Left colon (tissue), 2 donors: ENCODE measurements at regions of chr1 and their contacts with region 1.

Region 1: GRCh38 chr1:171743081-171743870 is 1.4 kb upstream of the VAMP4 start:
- DNase-seq: peak; percentile 29 to 41
- ATAC-seq: peak; percentile 61

Region 2: DNA sequence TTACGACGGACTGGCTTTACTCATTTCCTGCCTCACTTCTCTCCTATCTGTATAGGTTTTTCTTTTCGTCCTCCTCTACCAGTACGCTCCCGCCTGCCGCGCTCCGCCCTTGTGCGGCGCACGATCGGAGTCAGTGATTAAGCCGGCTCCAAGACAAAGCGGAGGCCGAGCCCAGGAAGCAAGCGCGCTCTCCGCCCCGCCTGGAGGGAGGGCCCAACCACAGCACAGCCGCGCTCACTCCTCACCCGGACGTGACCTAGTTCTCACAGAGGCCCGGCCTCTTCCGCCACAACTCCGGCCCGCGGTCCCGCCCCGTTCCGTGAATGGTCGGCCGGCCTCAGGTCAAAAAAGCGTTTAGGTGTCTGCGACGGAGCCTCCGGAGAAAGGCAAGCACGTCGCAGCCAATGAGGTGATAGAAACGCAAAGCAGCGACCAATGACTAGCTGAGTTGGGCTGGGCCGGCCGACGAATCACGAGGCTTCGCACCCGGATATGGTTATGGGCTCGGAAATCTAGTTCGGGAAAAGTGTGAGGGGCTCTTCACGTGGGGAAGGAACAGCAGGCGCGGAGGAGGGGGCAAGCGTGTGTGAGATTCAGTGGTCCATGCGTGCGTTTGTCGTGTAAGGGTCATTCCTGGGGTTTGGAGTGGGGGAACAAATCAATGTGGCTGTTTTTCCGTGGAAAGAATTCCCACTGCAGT is 38.0 kb after region 1 on chr1 and contains the start of gene METTL13:
- intact Hi-C with region 1: loop called in 1 of 2 experiments (anchors 1 kb)
- DNase-seq: peak; percentile 98 to 99
- ATAC-seq: peak; percentile 95
- total RNA-seq, gene METTL13: 22.1 to 24.8 TPM

Region 3: GRCh38 chr1:172069534-172069933 is 326.3 kb after region 1 on chr1:
- intact Hi-C with region 1: no loop called
- DNase-seq: no peak
- ATAC-seq: no peak